IMR-90 (cell line): ENCODE measurements at regions of chr14 and their contacts with region 1.

Region 1: DNA sequence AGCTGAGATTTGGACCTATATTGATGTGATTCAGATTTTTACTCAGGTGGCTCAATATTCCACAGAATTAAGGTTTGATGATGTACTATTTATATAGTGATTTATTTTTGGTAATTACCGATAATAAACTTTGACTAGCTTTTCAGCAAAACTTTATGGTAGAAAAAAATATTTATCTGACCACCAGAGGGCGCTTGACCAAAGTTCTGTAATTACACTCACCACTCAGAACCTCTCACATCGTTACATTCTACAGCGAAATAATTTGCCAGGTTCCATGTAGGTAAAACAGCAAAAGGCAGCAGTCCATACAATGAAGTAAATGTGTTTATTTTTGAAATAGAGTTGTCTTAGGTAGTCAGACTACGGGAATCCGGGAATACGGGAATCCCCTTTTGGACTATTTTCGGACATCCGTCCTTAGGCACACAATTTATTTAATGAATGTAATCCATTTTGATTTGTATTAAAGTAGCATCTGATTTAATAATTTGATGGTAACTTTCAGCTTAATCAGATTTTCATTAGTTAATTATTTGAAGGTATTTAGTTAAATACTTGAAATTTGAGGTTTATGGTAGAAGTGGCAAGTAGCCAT is 143.0 kb upstream of the DDHD1 start:
- DNase-seq: peak; percentile 45
- ATAC-seq: no peak
- H3K4me3 ChIP-seq: no peak overlapping the region
- H3K27ac ChIP-seq: no peak overlapping the region
- H3K4me1 ChIP-seq: no peaks in the 10 kb centered on the region
- H3K27me3 ChIP-seq: no peaks in the 10 kb centered on the region
- CTCF ChIP-seq: peak; percentile 55
- POLR2A ChIP-seq: no peak
- RAD21 ChIP-seq: peak; percentile 46

Region 2: DNA sequence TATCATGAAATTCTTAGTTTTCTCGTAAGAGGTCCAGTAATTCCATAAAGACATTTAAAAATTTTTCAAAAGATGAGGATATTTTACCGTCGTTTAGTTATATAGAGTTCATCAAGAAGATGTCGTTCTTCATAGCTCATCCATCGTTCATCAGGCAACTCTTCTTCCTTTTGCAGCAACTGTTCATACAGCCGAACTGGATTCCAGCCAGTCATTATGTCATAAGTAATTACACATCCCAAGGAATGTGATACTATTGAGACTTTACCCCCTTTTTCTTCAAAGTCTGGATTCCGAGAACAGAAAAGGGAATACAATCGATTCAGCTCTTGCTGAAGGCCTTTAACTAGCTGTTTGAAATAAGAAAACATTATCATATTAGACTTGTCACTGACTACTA is 233.2 kb before region 1 on chr14:
- CTCF ChIA-PET with region 1: no interaction called
- POLR2A ChIA-PET with region 1: no interaction called
- dilution Hi-C with region 1: no loop called
- in situ Hi-C with region 1: no loop called
- intact Hi-C with region 1: loop called (anchors 5 kb)
- DNase-seq: peak; percentile 70
- ATAC-seq: peak; percentile 35; the same call in 1 of the 2 replicates
- H3K4me3 ChIP-seq: no peak overlapping the region
- H3K27ac ChIP-seq: no peak overlapping the region
- H3K4me1 ChIP-seq: no peaks in the 10 kb centered on the region
- H3K27me3 ChIP-seq: no peaks in the 10 kb centered on the region
- CTCF ChIP-seq: no peak
- POLR2A ChIP-seq: no peak
- RAD21 ChIP-seq: no peak

Region 3: DNA sequence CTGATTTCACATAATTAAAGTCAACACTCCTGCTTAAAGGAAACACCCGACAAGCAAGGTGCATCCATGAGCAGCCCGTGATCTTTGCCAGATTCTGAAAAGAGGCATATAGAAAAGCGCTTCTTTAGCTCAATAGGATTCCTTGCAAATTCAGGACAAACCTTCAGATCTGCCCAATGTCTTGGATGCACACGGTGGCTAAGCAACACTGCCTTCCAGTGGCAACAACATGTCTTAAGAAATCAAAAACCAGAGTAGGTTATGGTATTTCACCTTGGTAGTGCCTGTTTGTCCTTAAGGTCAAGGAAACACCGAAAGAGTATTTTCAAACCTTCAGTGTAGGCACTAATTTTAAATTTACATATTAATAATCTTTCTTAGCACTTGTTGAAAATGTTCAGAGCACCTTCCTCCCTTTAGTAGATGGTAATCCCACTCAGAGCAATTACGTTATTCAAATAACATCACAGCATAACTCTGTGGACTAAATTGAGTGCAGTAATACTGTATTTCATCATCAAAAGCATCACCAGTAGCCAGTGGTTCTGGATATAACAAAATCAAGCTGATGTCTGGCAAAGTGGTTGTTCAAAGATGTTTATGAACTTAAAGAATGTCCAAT is 1042.7 kb after region 1 on chr14:
- CTCF ChIA-PET with region 1: no interaction called
- POLR2A ChIA-PET with region 1: no interaction called
- dilution Hi-C with region 1: no loop called
- in situ Hi-C with region 1: loop called (anchors 10 kb)
- intact Hi-C with region 1: no loop called
- DNase-seq: peak; percentile 57
- ATAC-seq: peak; percentile 78
- H3K4me3 ChIP-seq: no peak overlapping the region
- H3K27ac ChIP-seq: no peak overlapping the region
- H3K4me1 ChIP-seq: no peaks in the 10 kb centered on the region; the same call in 1 of the 2 replicates
- H3K27me3 ChIP-seq: peaks cover 9% of the 10 kb centered on the region
- CTCF ChIP-seq: peak; percentile 63
- POLR2A ChIP-seq: no peak
- RAD21 ChIP-seq: peak; percentile 77